Heart right ventricle (tissue), 16 donors: ENCODE measurements at regions of chr5 and their contacts with region 1.

Region 1: GRCh38 chr5:82165740-82166530 is 112.2 kb downstream of the RPS23 start:
- DNase-seq: peak; percentile 38 to 77
- ATAC-seq: peak; percentile 97 to 100 (median 99)
- H3K4me3 ChIP-seq: no peak overlapping the region
- H3K27ac ChIP-seq: peak overlapping the region in 6 of 10 donors; percentile 8 to 59 (median 38)
- H3K4me1 ChIP-seq: peaks cover 0 to 33% (median 12%) of the 10 kb centered on the region in 9 donors
- H3K27me3 ChIP-seq: no peaks in the 10 kb centered on the region
- CTCF ChIP-seq: peak; percentile 52 to 85 (median 76)

Region 2: DNA sequence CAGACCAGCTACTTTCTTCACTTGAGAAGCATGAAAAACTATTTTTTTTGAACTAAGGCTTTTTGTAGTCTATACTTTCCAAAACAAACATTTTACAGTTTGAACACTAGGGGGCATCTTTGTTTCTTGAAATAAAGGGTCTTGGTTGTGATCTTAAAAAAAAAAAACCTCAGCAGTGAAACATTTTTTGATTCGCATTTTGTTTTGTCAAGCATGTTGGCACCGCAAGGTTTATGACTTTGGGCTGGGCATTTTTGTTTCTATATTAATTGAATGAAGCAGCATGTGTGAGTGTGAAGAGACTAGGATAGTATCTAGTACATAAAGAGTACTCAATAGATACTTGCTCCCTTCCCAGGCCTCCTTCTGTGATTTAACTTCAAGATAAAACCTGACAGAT is 740.4 kb before region 1 on chr5:
- intact Hi-C with region 1: loop called (anchors 1 to 10 kb)
- DNase-seq: no peak
- ATAC-seq: peak in 7 of 8 donors; percentile 33 to 81 (median 65)
- H3K4me3 ChIP-seq: no peak overlapping the region
- H3K27ac ChIP-seq: peak overlapping the region in 4 of 10 donors; percentile 14 to 57 (median 30)
- H3K4me1 ChIP-seq: peaks cover 0 to 34% (median 20%) of the 10 kb centered on the region in 9 donors
- H3K27me3 ChIP-seq: no peaks in the 10 kb centered on the region
- CTCF ChIP-seq: peak; percentile 63 to 80 (median 71)

Region 3: DNA sequence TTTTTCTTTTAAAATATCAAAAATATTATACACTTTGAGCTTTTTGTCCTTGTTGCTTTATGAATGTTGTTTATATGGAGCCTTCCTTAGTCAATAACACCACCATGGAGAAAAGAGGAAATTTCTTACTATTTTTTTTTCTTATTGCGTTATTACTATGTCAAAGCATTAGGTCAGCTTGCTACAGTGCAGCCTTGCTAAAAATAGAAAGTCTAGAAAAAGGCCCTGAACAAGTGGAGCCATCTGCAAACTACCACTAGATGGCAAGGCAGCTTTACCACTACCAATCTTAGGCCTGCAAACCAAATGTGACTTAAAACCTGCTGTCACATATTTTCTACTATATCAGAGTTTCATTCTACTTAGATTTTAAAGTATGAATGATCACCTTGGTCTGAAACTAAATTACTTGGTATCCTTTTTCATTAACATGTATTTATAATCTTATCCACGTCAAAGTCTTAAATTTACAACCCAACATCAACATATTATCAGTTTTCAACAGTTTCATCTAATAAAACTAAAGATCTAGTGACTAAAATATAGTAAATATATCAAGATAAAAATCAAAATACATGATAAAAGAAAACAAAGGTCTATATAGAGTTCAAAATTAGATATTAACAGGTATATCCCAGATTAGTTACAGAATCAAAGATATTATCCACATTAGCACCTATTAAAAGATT is 658.9 kb before region 1 on chr5:
- intact Hi-C with region 1: loop called in 7 of 10 experiments (anchors 2 to 10 kb)
- DNase-seq: peak in 1 of 2 donors; percentile 80
- ATAC-seq: peak; percentile 97 to 100 (median 98)
- H3K4me3 ChIP-seq: peak overlapping the region in 1 of 10 donors; percentile 9
- H3K27ac ChIP-seq: peak overlapping the region in 6 of 10 donors; percentile 45 to 74 (median 61)
- H3K4me1 ChIP-seq: peaks cover 0 to 27% (median 20%) of the 10 kb centered on the region in 9 donors
- H3K27me3 ChIP-seq: no peaks in the 10 kb centered on the region
- CTCF ChIP-seq: peak; percentile 82 to 97 (median 85)

Region 4: GRCh38 chr5:81513982-81514381 is 652.0 kb before region 1 on chr5:
- intact Hi-C with region 1: loop called in 4 of 10 experiments (anchors 5 to 10 kb)
- DNase-seq: no peak
- ATAC-seq: no peak
- H3K4me3 ChIP-seq: no peak overlapping the region
- H3K27ac ChIP-seq: no peak overlapping the region
- H3K4me1 ChIP-seq: no peaks in the 10 kb centered on the region
- H3K27me3 ChIP-seq: no peaks in the 10 kb centered on the region
- CTCF ChIP-seq: peak in 6 of 9 donors; percentile 10 to 41 (median 30)

Region 5: DNA sequence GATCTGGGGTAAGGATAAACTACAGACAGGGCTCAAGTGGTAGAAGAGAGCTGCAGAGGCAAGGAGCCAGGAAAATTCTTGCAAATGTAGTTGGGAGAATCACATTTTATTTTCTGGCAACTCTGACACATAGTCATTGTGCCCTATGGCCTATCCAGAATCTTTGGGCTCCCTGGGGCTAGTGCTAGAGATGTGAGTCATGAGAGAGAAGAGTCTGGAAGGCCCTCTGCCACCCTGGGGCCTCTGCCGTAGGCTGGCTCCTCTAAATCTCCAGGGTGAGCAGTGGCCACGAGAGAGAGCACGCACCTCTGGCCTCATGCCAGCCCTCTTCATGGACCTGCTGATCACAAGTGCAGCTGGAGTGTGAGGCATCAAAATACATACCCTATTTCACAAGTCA is 340.7 kb before region 1 on chr5:
- intact Hi-C with region 1: no loop called
- DNase-seq: peak; percentile 67 to 69
- ATAC-seq: peak; percentile 50 to 94 (median 77)
- H3K4me3 ChIP-seq: no peak overlapping the region
- H3K27ac ChIP-seq: peak overlapping the region in 1 of 10 donors; percentile 22
- H3K4me1 ChIP-seq: peaks cover 0 to 26% (median 6%) of the 10 kb centered on the region in 9 donors
- H3K27me3 ChIP-seq: no peaks in the 10 kb centered on the region
- CTCF ChIP-seq: no peak

Region 6: GRCh38 chr5:81971712-81972495 is 194.0 kb before region 1 on chr5 and contains the start of gene ATG10:
- intact Hi-C with region 1: loop called in 2 of 10 experiments (anchors 10 kb)
- DNase-seq: peak; percentile 91 to 94
- ATAC-seq: peak; percentile 99 to 100 (median 99)
- H3K4me3 ChIP-seq: peak within 1 kb of the TSS; percentile 37 to 86 (median 68)
- H3K27ac ChIP-seq: peak within 1 kb of the TSS; percentile 97 to 100 (median 99)
- H3K4me1 ChIP-seq: peaks cover 0 to 20% (median 0%) of the 10 kb centered on the region in 9 donors
- H3K27me3 ChIP-seq: no peaks in the 10 kb centered on the region
- CTCF ChIP-seq: no peak
- total RNA-seq, gene ATG10: 4.6 to 8.0 (median 7.2) TPM

Region 7: DNA sequence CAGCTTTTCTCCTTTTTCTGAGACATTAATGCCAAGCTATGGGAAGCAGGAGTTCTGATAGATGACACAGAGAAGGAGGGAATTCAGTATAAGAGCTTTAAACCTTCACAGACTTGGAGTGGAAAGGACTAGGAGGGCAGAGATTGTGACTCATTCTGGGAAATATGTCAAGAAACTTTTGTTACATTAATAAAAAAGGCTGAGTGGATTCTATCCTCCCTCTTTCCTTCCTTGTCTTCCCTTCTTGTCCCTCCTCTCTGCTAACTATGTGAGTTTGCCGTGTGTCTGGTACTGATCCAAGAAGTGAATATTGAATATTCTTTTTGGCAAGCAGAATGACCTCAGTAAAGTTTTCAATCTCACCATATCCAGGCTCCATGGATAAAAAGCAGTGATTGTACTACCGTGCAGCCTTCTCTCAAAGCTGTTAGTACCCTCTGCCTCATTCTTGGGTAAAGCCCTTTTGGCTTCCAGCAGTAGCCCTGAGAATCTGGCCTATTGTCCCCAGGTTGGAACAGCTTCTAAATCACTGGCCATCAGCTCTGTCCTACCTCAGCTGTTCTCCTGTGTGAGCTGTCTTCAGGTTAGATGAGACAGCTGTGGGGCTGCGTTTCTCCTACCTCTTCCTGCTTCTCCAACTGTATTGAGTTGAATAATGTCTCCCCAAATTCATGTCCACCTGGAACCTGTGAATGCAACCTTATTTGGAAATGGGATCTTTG is 120.2 kb before region 1 on chr5:
- intact Hi-C with region 1: no loop called
- DNase-seq: no peak
- ATAC-seq: no peak
- H3K4me3 ChIP-seq: no peak overlapping the region
- H3K27ac ChIP-seq: no peak overlapping the region
- H3K4me1 ChIP-seq: peaks cover 0 to 16% (median 0%) of the 10 kb centered on the region in 9 donors
- H3K27me3 ChIP-seq: no peaks in the 10 kb centered on the region
- CTCF ChIP-seq: no peak

Region 8: DNA sequence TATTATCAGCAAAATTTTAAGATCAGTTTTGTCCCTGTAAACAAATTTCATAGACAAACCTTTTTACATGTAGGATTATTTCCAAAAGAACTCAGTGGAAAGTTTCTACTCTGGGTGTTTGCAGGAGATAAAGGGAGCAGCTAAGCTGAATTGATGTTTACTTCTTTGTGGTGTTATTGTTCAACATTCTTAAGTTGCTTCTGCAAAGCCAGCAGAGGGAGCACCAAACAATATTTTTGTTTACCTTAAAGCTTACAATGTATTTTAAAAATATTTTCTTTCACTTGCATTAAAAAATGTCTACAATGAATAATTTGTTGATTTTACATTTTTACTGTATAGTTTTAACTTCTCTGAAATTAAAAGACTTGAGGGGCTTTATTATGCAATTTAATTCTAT is 58.7 kb before region 1 on chr5:
- intact Hi-C with region 1: loop called in 1 of 10 experiments (anchors 5 kb)
- DNase-seq: no peak
- ATAC-seq: peak in 2 of 8 donors; percentile 54 to 62
- H3K4me3 ChIP-seq: no peak overlapping the region
- H3K27ac ChIP-seq: peak overlapping the region in 1 of 10 donors; percentile 13
- H3K4me1 ChIP-seq: peaks cover 6 to 25% (median 20%) of the 10 kb centered on the region in 9 donors
- H3K27me3 ChIP-seq: no peaks in the 10 kb centered on the region
- CTCF ChIP-seq: peak in 8 of 9 donors; percentile 10 to 63 (median 48)

Region 9: DNA sequence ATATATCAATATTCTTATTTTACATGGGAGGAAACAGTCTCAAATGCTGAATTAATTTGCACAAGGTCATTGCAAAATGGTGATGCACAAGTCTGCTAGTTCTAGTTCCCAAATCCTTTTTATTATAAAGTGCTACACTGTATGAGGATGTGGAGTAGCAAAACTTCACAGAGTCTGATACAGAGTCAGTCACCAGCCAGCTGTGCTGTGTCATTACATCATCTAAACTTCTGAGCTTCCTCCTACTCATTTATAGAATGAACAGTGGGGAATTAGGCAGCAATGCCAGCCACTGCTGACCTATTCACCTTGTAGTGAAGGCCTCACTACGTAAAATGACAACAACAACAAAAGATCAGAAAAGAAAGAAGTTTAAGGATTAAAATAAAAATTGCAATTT is 553.4 kb after region 1 on chr5:
- intact Hi-C with region 1: no loop called
- DNase-seq: peak in 1 of 2 donors; percentile 25
- ATAC-seq: peak in 6 of 8 donors; percentile 66 to 87 (median 76)
- H3K4me3 ChIP-seq: no peak overlapping the region
- H3K27ac ChIP-seq: peak overlapping the region in 2 of 10 donors; percentile 17 to 36
- H3K4me1 ChIP-seq: peaks cover 0 to 20% (median 10%) of the 10 kb centered on the region in 9 donors
- H3K27me3 ChIP-seq: no peaks in the 10 kb centered on the region
- CTCF ChIP-seq: no peak